Vagina (tissue), 2 donors: ENCODE measurements at regions of chr2 and their contacts with region 1.

Region 1: GRCh38 chr2:217356781-217357180 is 496.9 kb upstream of the TNP1 start:
- DNase-seq: no peak
- H3K4me3 ChIP-seq: no peak overlapping the region
- H3K27ac ChIP-seq: peak overlapping the region; percentile 40
- H3K4me1 ChIP-seq: peaks cover 28% of the 10 kb centered on the region
- H3K27me3 ChIP-seq: no peaks in the 10 kb centered on the region
- CTCF ChIP-seq: no peak
- POLR2A ChIP-seq: no peak

Region 2: DNA sequence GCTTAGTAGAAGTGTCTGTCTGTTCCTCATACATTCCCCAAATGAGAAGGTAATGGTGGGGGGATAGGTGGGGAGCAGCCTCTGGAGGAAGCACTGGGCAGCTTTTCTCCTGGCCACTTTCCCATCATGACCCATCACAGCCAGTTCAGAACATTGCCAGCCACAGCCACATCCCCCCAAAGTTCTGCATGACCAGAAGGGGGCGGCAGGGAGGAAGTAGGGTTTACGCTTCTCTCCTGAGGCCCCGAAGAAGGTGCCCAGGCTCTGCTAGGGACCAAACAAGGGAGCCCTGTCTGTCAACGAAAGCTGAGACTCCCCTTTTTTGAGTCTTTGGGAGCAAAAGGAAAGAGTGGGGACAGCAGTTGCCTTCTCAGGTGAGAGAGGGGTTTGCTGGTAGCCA is 669.1 kb before region 1 on chr2:
- intact Hi-C with region 1: loop called (anchors 10 kb)
- DNase-seq: no peak
- H3K4me3 ChIP-seq: no peak overlapping the region
- H3K27ac ChIP-seq: peak overlapping the region; percentile 90
- H3K4me1 ChIP-seq: peaks cover 92% of the 10 kb centered on the region
- H3K27me3 ChIP-seq: no peaks in the 10 kb centered on the region
- CTCF ChIP-seq: no peak
- POLR2A ChIP-seq: no peak